Heart left ventricle (tissue), 16 donors: ENCODE measurements at regions of chr6 and their contacts with region 1.

Region 1: DNA sequence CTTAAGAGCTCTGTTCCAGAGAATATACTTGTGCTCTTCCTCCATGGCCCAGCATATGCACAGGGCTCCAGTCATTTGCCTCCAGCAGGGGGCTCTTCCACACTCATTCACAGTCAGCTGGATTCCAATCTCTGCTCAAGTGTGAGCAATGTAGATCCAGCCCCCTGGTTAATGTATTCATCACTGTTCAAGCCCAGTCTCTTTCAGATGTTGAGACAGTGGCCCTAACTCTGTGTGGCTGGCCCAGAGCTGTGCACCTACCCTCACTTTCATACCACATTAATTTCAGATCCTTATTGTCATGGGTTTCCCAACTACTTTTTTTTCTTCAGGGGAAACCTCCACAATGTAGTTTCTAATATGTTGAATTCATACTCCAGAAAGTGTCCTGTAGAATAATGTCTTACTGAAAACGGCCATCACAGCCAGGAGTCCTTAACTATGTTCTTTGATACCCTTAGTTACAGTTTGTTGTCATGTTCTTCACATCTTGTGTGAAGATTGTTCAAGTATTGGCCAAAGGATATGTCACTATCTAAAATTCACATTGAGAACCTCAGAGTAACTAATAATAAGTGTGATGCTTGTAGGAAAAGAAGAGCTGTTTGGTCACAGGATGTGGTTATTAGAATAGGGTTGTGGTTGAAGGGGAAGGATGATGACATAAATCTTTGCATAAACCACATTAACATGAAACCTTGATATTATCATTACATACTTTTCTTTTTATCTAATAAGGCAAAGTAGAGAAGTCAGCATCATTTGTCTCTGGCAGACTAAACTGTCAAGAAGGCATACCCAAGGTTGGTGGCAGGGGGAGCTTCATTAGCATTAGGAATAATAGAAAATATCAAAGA is 14.4 kb upstream of the HLA-DQA1 start:
- DNase-seq: peak in 3 of 5 donors; percentile 26 to 58 (median 28)
- ATAC-seq: peak in 3 of 4 donors; percentile 67 to 87 (median 76)
- H3K4me3 ChIP-seq: no peak overlapping the region
- H3K27ac ChIP-seq: peak overlapping the region in 2 of 12 donors; percentile 41 to 72
- H3K4me1 ChIP-seq: peaks cover 0 to 14% (median 0%) of the 10 kb centered on the region in 12 donors
- H3K27me3 ChIP-seq: no peaks in the 10 kb centered on the region
- CTCF ChIP-seq: peak in 9 of 12 donors; percentile 29 to 63 (median 47)
- POLR2A ChIP-seq: no peak

Region 2: DNA sequence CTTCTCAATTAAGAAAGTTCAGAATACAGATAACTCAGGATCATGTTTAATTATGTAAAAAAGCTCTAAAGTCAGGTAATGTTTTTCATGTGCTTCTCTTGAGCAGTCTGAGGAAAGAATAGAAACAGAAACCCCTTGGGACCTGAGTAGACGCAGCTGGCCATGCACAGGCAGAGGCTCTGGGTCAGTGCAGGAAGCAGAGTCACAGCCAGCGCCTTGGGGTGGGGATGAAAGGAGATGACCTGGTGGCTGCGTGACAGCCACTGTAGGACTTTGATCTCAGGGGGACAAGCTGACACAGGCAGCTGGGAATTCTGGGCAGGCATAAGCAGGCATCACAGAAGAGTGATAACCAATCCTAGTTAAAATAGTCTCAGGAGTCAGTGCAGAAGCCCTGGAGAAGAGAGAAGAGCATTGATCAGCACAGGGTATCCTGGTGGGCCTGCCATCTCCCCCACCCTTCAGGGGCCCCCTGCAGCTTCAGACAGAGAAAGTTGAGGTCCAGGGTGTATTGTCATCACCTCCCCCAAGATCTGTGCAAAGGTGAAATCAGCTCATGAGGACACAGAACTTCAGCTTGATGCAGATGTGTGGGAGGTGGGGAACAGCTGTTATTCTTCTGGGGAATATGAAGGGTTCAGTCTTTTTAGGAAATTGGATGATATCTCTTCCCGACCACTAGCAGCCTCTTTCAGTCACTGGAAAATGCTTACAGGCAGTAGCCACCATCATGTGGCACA is 37.3 kb after region 1 on chr6:
- intact Hi-C with region 1: loop called in 1 of 10 experiments (anchors 5 kb)
- DNase-seq: peak in 2 of 5 donors; percentile 31 to 34
- ATAC-seq: peak in 1 of 4 donors; percentile 90
- H3K4me3 ChIP-seq: no peak overlapping the region
- H3K27ac ChIP-seq: no peak overlapping the region
- H3K4me1 ChIP-seq: peaks cover 0 to 4% (median 0%) of the 10 kb centered on the region in 12 donors
- H3K27me3 ChIP-seq: peaks cover 0 to 9% (median 0%) of the 10 kb centered on the region in 9 donors
- CTCF ChIP-seq: no peak
- POLR2A ChIP-seq: no peak

Region 3: DNA sequence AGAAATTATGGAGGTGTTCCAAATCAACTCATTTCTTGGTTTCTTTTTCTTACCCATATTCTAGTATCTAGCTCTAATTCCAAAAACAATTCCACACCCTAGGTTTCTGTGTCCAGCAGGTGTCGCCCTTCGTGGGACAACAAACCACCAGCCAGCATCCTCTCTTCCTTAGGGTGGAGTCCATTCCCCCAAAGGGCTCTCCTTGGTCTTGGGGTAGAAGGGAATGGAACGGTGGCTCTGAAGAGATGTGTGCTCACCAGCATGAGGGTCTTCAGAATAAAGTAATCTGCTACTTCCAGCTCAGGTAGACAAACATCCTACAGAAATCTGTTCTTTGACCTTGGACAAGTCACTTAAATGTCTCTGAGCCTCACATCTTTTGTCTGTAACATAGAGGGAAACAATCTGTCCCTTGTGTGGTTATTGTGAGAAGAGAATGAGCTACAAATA is 310.9 kb after region 1 on chr6:
- intact Hi-C with region 1: no loop called
- DNase-seq: peak; percentile 74 to 85 (median 77)
- ATAC-seq: peak in 3 of 4 donors; percentile 57 to 73 (median 71)
- H3K4me3 ChIP-seq: no peak overlapping the region
- H3K27ac ChIP-seq: peak overlapping the region in 1 of 12 donors; percentile 43
- H3K4me1 ChIP-seq: peaks cover 0 to 66% (median 0%) of the 10 kb centered on the region in 12 donors
- H3K27me3 ChIP-seq: no peaks in the 10 kb centered on the region
- CTCF ChIP-seq: peak; percentile 67 to 90 (median 81)
- POLR2A ChIP-seq: no peak